ENCODE measurements at regions of chr4 and their contacts with region 1.

Region 1: DNA sequence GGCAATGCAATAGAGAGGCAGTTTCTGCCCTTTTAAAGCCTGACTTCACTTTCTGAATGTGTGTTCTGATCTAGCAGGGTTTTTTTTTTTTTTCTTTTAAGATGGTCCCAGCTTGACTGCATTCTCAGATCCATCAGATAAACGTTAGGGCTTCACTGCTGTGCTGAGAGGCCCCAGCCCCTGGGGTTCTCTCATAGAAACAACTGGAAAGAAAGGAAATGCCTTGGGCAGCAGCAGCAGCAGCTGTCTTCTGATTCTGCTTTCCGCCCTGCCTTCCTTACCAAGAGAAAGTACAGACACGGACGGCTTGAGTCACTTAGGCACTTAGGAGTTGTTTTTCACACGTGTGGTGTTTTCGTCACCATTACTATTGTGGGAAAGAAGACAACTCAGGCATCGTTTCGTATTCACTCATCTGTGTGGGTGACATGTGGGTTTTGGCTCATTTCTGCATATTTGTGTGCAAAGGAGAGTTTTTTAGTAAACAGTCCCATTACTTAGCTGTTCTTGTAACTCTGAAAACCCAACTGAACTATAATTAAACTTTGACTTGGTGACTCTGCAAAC is 172.0 kb downstream of the PTTG2 start:
- DNase-seq: no peak
- ATAC-seq: no peak
- H3K4me3 ChIP-seq: no peak overlapping the region; a peak in 1 of 6 replicates
- H3K27ac ChIP-seq: peak overlapping the region; percentile 92
- H3K4me1 ChIP-seq: peaks cover 90% of the 10 kb centered on the region
- H3K27me3 ChIP-seq: no peaks in the 10 kb centered on the region
- CTCF ChIP-seq: no peak
- EP300 ChIP-seq: 0 out of 4 replicates have a peak, but pooled peaks of 1 of the 2 experiments have one; percentile 7
- POLR2A ChIP-seq: no peak
- RAD21 ChIP-seq: no peak

Region 2: DNA sequence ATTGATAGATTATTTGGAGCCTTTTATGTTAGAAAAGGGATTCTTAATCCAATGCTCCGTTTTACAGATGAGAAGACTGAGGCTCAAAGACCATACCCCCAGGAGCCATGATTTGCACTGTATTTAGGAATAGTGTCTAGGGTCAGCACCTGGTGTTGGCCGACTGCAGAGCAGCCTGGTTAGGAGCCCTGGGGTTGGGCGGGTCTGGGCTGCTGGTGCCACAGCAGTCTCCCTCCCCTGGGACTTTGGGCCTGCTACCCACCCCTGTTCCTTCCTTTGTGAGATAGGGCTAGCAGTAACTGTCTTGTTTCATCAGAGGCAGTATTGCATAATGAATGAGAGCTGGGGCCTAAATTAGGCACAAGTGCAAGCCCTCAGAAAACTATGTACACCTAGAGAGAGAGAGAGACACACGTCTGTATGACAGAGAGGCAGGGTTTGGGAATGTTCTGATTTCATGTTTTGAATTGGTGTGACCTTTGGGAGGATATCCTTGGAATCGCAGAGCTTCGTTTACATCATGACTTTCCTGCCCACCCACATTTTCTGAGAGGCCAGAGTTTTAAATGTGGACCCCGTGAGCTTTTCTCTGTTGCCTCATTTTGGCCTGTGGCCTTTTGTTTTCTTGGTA is 60.3 kb before region 1 on chr4:
- CTCF ChIA-PET with region 1: no interaction called
- POLR2A ChIA-PET with region 1: interaction called, 84 read pairs
- in situ Hi-C with region 1: loop called (anchors 5 kb)
- intact Hi-C with region 1: loop called (anchors 1 kb)
- DNase-seq: peak; percentile 91
- ATAC-seq: peak; percentile 86
- H3K4me3 ChIP-seq: no peak overlapping the region
- H3K27ac ChIP-seq: peak overlapping the region; percentile 97
- H3K4me1 ChIP-seq: peaks cover 81% of the 10 kb centered on the region
- H3K27me3 ChIP-seq: no peaks in the 10 kb centered on the region
- CTCF ChIP-seq: peak; percentile 70
- EP300 ChIP-seq: peak in 1 of 2 experiments; percentile 85; a peak in 2 of 4 replicates
- POLR2A ChIP-seq: no peak
- RAD21 ChIP-seq: no peak

Region 3: GRCh38 chr4:38114386-38115150 is 17.6 kb before region 1 on chr4:
- CTCF ChIA-PET with region 1: no interaction called
- POLR2A ChIA-PET with region 1: interaction called, 38 read pairs
- in situ Hi-C with region 1: no loop called
- intact Hi-C with region 1: no loop called
- DNase-seq: no peak
- ATAC-seq: no peak
- H3K4me3 ChIP-seq: no peak overlapping the region
- H3K27ac ChIP-seq: no peak overlapping the region
- H3K4me1 ChIP-seq: peaks cover 43% of the 10 kb centered on the region
- H3K27me3 ChIP-seq: no peaks in the 10 kb centered on the region
- CTCF ChIP-seq: no peak
- EP300 ChIP-seq: no peak
- POLR2A ChIP-seq: no peak
- RAD21 ChIP-seq: no peak

Region 4: GRCh38 chr4:38160487-38161207 is 28.5 kb after region 1 on chr4:
- CTCF ChIA-PET with region 1: no interaction called
- POLR2A ChIA-PET with region 1: interaction called, 124 read pairs
- in situ Hi-C with region 1: loop called (anchors 5 kb)
- intact Hi-C with region 1: loop called (anchors 1 kb)
- DNase-seq: peak; percentile 98
- ATAC-seq: peak; percentile 90
- H3K4me3 ChIP-seq: no peak overlapping the region
- H3K27ac ChIP-seq: peak overlapping the region; percentile 98
- H3K4me1 ChIP-seq: peaks cover 58% of the 10 kb centered on the region
- H3K27me3 ChIP-seq: no peaks in the 10 kb centered on the region
- CTCF ChIP-seq: no peak
- EP300 ChIP-seq: peak; percentile 95 to 98
- POLR2A ChIP-seq: no peak
- RAD21 ChIP-seq: peak; percentile 45; the same call in 1 of the 2 replicates

Region 5: DNA sequence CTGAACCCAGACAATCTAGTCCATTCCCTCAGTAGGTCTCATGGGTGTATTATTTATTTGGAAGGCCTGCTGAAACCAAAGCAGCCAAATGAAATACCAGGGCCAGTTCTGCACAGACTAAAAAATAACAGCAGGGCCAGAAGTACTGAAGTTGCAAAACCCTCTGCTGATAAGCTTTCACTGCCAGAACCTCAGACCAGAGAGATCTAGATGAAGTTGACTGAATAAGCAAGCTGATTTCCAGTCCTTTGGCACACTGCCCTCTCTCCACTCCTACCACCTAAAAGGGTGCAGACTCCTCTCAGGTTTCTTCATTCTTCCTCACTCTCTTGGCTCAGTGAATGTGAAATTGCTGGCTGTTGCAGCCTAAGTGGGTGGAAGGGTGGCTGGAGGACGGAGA is 255.2 kb after region 1 on chr4:
- CTCF ChIA-PET with region 1: no interaction called
- POLR2A ChIA-PET with region 1: no interaction called
- in situ Hi-C with region 1: no loop called
- intact Hi-C with region 1: no loop called
- DNase-seq: peak; percentile 50
- ATAC-seq: no peak; the same call in 2 of the 3 replicates
- H3K4me3 ChIP-seq: no peak overlapping the region
- H3K27ac ChIP-seq: peak overlapping the region; percentile 96
- H3K4me1 ChIP-seq: peaks cover 70% of the 10 kb centered on the region
- H3K27me3 ChIP-seq: no peaks in the 10 kb centered on the region
- CTCF ChIP-seq: no peak
- EP300 ChIP-seq: no peak
- POLR2A ChIP-seq: no peak
- RAD21 ChIP-seq: no peak